OCI-LY7 (cell line): ENCODE measurements at regions of chr11 and their contacts with region 1.

Region 1: GRCh38 chr11:6022956-6023355 is 7.6 kb downstream of the OR56A1 start:
- DNase-seq: peak; percentile 61
- H3K4me3 ChIP-seq: no peak overlapping the region
- H3K27ac ChIP-seq: no peak overlapping the region
- H3K4me1 ChIP-seq: no peaks in the 10 kb centered on the region
- CTCF ChIP-seq: peak; percentile 79

Region 2: GRCh38 chr11:6298605-6299004 is 275.6 kb after region 1 on chr11:
- CTCF ChIA-PET with region 1: no interaction called
- POLR2A ChIA-PET with region 1: no interaction called
- intact Hi-C with region 1: loop called (anchors 5 kb)
- DNase-seq: peak; percentile 53
- H3K4me3 ChIP-seq: no peak overlapping the region
- H3K27ac ChIP-seq: no peak overlapping the region
- H3K4me1 ChIP-seq: no peaks in the 10 kb centered on the region
- CTCF ChIP-seq: peak; percentile 74

Region 3: DNA sequence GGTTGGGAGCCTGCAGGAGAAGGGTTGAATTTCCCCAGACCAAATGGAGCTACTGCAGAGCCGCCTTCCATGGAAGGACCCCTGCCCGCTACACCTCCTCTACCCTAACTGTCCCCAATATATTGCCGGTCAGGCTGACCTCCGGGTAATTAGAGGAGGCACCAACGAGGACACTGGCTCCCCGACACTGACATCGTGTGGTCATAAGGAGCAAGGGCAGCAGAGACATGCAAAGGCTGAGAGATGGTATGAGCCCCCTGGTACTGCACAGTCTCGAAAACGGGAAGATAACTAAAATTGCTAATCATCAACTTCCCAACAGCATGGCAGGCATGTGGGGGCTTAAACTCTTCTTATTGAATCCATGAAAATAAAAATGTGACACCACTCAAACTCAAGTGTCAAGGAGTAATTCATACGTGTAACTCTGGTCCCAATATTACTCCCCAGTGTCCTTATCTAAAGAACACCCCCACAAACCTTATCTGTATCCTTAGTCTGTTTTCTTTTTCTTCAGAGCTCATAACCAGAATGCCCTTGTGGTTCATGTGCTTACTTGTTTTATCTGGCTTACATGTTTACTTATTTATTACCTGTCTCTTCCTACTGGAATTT is 293.0 kb after region 1 on chr11:
- CTCF ChIA-PET with region 1: no interaction called
- POLR2A ChIA-PET with region 1: no interaction called
- intact Hi-C with region 1: loop called (anchors 1 kb)
- DNase-seq: peak; percentile 62
- H3K4me3 ChIP-seq: no peak overlapping the region
- H3K27ac ChIP-seq: no peak overlapping the region
- H3K4me1 ChIP-seq: no peaks in the 10 kb centered on the region
- CTCF ChIP-seq: peak; percentile 87